OCI-LY7 (cell line): ENCODE measurements at regions of chr19 and their contacts with region 1.

Region 1: GRCh38 chr19:52535771-52536447 is 8.4 kb downstream of the ZNF808 start:
- DNase-seq: peak; percentile 92
- H3K4me3 ChIP-seq: peak overlapping the region; percentile 79
- H3K27ac ChIP-seq: peak overlapping the region; percentile 76
- H3K4me1 ChIP-seq: peaks cover 15% of the 10 kb centered on the region
- CTCF ChIP-seq: no peak

Region 2: DNA sequence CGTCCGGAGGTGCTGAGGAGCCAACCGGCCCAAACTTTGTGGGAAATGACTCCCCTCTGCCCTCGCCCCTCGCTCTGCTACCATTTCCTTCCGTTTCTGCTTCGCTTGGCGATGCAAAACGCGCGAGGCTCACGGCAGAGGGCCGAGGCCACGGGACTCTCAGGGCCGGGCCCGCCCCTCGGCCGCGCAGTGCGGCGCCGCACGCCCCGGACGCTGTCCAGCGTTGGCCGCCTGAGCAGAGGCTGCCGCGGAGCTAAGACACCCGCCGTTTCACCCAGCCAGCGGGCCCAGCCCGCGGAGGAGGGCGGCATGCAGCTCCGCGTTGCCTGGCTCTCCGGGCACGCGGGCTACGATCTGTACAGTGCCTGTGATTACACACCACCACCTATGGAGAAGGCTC is 84.7 kb before region 1 on chr19:
- CTCF ChIA-PET with region 1: no interaction called
- POLR2A ChIA-PET with region 1: no interaction called
- intact Hi-C with region 1: no loop called
- DNase-seq: no peak
- H3K4me3 ChIP-seq: no peak overlapping the region
- H3K27ac ChIP-seq: no peak overlapping the region
- H3K4me1 ChIP-seq: no peaks in the 10 kb centered on the region
- CTCF ChIP-seq: no peak

Region 3: GRCh38 chr19:52570000-52570861 is 34.3 kb after region 1 on chr19 and contains the start of gene ZNF701:
- CTCF ChIA-PET with region 1: no interaction called
- POLR2A ChIA-PET with region 1: no interaction called
- intact Hi-C with region 1: loop called (anchors 5 kb)
- DNase-seq: peak; percentile 92
- H3K4me3 ChIP-seq: peak within 1 kb of the TSS; percentile 88
- H3K27ac ChIP-seq: peak within 1 kb of the TSS; percentile 80
- H3K4me1 ChIP-seq: peaks cover 12% of the 10 kb centered on the region
- CTCF ChIP-seq: no peak; the same call in 1 of the 2 replicates
- total RNA-seq, gene ZNF701: 18.0 and 18.1 TPM in 2 replicates